ENCODE measurements at regions of chr2 and their contacts with region 1.

Region 1: DNA sequence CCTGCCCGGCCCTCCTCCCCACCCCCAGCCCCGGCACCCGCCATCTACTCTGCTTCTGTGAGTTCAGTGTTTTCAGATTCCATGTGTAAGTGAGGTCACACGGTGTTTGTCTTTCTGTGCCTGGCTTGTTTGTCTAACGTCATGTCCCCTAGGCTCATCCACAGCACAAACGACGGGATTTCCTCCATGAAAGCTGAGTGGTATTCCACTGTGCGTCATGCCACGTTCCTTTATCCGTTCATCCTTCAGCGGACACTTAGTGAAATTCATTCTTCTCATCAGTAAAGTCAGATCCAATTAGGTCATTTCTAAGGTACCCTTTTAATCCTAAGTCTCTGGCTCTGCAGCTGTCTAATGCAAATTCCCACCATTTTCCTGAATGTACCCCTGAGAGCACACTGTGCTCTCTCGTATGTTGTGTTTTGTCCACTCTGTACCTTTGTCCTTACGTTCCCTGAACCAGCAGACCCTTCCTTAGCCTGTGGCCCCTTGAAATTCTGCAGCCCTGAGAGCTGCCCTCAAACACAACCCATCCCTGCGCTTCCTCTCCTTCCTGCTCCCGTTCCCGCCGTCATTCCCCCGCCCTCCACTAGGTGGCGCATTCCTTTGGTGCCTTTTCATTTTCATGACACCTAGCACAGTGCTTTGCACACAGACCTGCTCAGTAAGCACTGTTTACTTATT is 44.1 kb downstream of the TRAPPC12 start:
- DNase-seq: peak; percentile 77
- H3K4me3 Mint-ChIP-seq: no peak overlapping the region
- H3K27ac Mint-ChIP-seq: no peak overlapping the region
- H3K4me1 Mint-ChIP-seq: no peaks in the 10 kb centered on the region
- H3K27me3 Mint-ChIP-seq: no peaks in the 10 kb centered on the region

Region 2: GRCh38 chr2:3379647-3380534 is 43.7 kb before region 1 on chr2 and contains the start of gene TRAPPC12:
- CTCF ChIA-PET with region 1: interaction called, 10 read pairs
- POLR2A ChIA-PET with region 1: interaction called, 7 read pairs
- DNase-seq: peak; percentile 95
- H3K4me3 Mint-ChIP-seq: peak within 1 kb of the TSS; percentile 99
- H3K27ac Mint-ChIP-seq: peak within 1 kb of the TSS; percentile 96
- H3K4me1 Mint-ChIP-seq: peaks cover 57% of the 10 kb centered on the region
- H3K27me3 Mint-ChIP-seq: no peaks in the 10 kb centered on the region
- total RNA-seq, gene TRAPPC12: 74.5 to 75.6 TPM

Region 3: GRCh38 chr2:3442185-3442584 is 18.6 kb after region 1 on chr2:
- CTCF ChIA-PET with region 1: interaction called, 23 read pairs
- POLR2A ChIA-PET with region 1: interaction called, 3 read pairs
- DNase-seq: no peak
- H3K4me3 Mint-ChIP-seq: no peak overlapping the region
- H3K27ac Mint-ChIP-seq: no peak overlapping the region
- H3K4me1 Mint-ChIP-seq: no peaks in the 10 kb centered on the region
- H3K27me3 Mint-ChIP-seq: no peaks in the 10 kb centered on the region

Region 4: DNA sequence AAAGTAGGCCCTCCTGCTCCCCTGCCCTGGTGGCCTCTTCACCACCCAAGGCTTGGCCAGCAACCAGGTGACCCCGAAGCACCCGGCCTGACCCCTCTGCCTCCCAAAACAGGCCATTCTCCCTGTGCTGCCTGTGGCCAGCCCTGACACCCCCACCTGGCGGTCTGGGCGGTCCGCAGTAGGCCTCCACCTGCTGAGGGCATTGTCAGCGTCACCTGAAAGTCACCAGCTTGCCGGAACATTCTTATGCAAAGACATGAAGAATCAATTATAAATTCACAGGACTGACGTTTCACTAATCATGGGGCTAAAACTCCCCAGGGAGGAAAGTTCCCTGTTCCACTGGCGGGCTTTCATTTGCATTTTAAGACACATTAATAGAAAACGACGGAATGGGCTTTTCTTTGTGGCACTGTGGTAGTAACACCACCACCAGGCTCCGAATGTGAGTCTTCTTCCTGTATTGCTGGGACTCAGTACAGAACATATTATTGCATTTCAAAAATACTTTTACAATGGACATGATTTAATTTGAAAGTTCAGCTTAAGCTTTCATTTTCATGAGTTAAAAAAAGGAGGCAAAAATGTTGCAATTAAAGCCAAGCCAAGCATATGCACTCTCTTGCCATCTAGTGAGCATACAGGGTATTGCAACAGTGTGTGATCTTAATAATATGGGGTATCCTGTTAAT is 38.3 kb after region 1 on chr2:
- CTCF ChIA-PET with region 1: interaction called, 16 read pairs
- POLR2A ChIA-PET with region 1: no interaction called
- DNase-seq: no peak
- H3K4me3 Mint-ChIP-seq: no peak overlapping the region
- H3K27ac Mint-ChIP-seq: peak overlapping the region; percentile 49
- H3K4me1 Mint-ChIP-seq: peaks cover 10% of the 10 kb centered on the region
- H3K27me3 Mint-ChIP-seq: no peaks in the 10 kb centered on the region

Region 5: DNA sequence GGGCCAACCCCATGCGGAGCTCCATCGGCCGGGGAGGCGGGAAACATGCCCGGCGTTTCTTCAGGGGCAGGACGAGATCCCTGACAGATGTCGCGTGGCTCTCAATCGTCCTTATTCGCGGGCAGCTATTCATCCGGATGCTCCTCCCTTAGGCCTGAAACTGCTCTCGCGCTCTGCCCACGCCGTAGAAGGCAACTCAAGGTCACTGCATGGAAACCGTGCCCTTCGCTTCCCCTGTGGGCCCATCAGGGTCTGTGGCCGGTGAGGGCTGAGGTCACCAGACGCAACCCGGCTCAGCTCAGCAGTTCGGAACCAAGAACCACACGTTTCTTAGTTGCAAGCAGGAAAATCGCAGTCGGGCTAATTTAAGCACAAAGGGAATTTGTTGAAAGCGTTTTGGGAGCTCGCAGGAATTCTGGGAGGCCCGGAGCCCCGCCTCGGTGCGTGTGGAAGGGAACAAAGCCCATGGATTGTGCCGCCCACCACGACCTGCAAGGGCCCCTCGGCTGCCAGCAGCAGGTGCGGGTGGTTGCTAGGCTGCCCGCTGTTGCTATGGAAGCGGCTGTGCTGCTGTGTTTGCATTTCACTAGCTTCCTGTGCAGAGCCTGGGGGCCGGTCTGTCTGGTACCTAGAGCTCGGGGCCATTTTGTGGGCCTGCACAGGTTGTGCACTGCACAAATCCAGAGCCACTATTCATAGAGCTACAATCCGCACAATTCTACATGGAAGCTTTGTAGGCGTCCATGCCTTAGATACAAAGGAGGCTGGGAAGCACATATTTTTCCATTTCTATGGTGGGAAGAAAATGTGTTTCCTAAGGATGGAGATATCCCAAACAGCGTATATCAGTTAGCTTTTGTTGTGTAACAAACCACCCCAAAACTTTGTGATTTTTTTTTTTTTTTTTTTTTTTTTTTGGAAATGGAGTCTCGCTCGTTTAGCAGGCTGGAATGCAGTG is 228.3 kb after region 1 on chr2:
- CTCF ChIA-PET with region 1: interaction called, 31 read pairs
- POLR2A ChIA-PET with region 1: interaction called, 3 read pairs
- DNase-seq: peak; percentile 78
- H3K4me3 Mint-ChIP-seq: peak overlapping the region; percentile 74
- H3K27ac Mint-ChIP-seq: peak overlapping the region; percentile 72
- H3K4me1 Mint-ChIP-seq: peaks cover 15% of the 10 kb centered on the region
- H3K27me3 Mint-ChIP-seq: no peaks in the 10 kb centered on the region